Mammary epithelial cell (primary cell): ENCODE measurements at regions of chr3 and their contacts with region 1.

Region 1: GRCh38 chr3:36868614-36869436 is 76.0 kb downstream of the TRANK1 start:
- DNase-seq: peak; percentile 45
- H3K4me3 ChIP-seq: no peak overlapping the region
- H3K27ac ChIP-seq: no peak overlapping the region
- H3K4me1 ChIP-seq: no peaks in the 10 kb centered on the region
- H3K27me3 ChIP-seq: no peaks in the 10 kb centered on the region
- CTCF ChIP-seq: peak; percentile 74 to 82

Region 2: GRCh38 chr3:35965908-35966307 is 902.9 kb before region 1 on chr3:
- CTCF ChIA-PET with region 1: no interaction called
- dilution Hi-C with region 1: no loop called
- in situ Hi-C with region 1: no loop called
- intact Hi-C with region 1: loop called (anchors 2 kb)
- DNase-seq: peak; percentile 14
- H3K4me3 ChIP-seq: no peak overlapping the region
- H3K27ac ChIP-seq: no peak overlapping the region
- H3K4me1 ChIP-seq: no peaks in the 10 kb centered on the region
- H3K27me3 ChIP-seq: peaks cover 5% of the 10 kb centered on the region
- CTCF ChIP-seq: peak; percentile 39 to 62

Region 3: GRCh38 chr3:36729204-36730056 is 139.4 kb before region 1 on chr3:
- CTCF ChIA-PET with region 1: no interaction called
- dilution Hi-C with region 1: no loop called
- in situ Hi-C with region 1: loop called in 1 of 2 experiments (anchors 10 kb)
- intact Hi-C with region 1: loop called (anchors 1 kb)
- DNase-seq: peak; percentile 28
- H3K4me3 ChIP-seq: no peak overlapping the region
- H3K27ac ChIP-seq: no peak overlapping the region
- H3K4me1 ChIP-seq: no peaks in the 10 kb centered on the region
- H3K27me3 ChIP-seq: no peaks in the 10 kb centered on the region
- CTCF ChIP-seq: peak; percentile 66 to 69

Region 4: GRCh38 chr3:36792342-36792741 is 76.5 kb before region 1 on chr3:
- CTCF ChIA-PET with region 1: interaction called, 3 read pairs
- dilution Hi-C with region 1: no loop called
- in situ Hi-C with region 1: no loop called
- intact Hi-C with region 1: loop called (anchors 1 kb)
- DNase-seq: peak; percentile 27
- H3K4me3 ChIP-seq: no peak overlapping the region
- H3K27ac ChIP-seq: no peak overlapping the region
- H3K4me1 ChIP-seq: no peaks in the 10 kb centered on the region
- H3K27me3 ChIP-seq: no peaks in the 10 kb centered on the region
- CTCF ChIP-seq: peak; percentile 54 to 76

Region 5: GRCh38 chr3:37050282-37050681 is 181.5 kb after region 1 on chr3:
- CTCF ChIA-PET with region 1: no interaction called
- dilution Hi-C with region 1: no loop called
- in situ Hi-C with region 1: no loop called
- intact Hi-C with region 1: no loop called
- DNase-seq: no peak
- H3K4me3 ChIP-seq: no peak overlapping the region
- H3K27ac ChIP-seq: no peak overlapping the region
- H3K4me1 ChIP-seq: no peaks in the 10 kb centered on the region
- H3K27me3 ChIP-seq: no peaks in the 10 kb centered on the region
- CTCF ChIP-seq: no peak